ENCODE measurements at regions of chr17 and their contacts with region 1.

Region 1: DNA sequence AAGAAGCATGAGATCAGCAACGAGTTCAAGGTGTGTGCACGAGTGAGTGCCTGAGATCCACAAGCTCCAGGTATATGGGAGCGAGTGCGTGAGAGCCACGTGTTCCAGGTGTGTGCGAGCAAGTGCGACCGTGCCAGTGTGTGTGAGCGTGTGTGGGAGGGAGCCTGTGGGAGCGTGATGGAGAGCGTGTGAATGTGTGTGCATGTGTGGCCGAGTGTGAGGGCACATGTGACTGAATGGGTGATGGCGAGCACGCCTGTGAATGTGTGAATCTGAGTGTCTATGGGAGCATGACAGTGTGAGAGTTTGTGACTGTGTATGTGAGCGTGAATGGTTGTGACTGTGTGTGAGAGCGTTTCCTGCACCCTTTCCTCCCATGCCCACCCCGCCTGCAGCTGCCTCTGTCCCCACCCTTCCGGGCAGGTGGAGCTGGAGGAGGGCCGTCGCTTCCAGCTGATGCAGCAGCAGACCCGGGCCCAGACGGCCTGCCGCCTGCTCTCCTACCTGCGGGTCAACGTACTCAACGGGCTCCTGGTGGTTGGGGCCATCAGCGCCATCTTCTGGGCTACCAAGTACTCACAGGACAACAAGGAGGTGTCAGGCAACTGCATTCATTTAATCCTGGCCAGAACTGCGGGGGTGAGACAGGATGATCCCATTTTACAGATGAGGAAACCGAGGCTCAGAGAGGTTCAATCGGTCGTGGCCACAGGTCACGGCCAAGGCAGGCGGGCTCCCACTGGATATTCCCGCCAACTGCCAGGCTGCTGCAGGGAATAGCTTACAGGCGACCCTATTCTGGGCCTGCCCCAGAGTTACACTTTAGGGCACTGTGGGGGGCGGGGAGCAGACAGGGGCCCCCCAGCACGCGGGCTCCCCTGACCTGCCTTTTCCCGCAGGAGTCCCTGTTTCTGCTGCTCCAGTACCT is 3.7 kb downstream of the TMC8 start:
- DNase-seq: no peak
- ATAC-seq: peak; percentile 34
- H3K4me3 ChIP-seq: peak overlapping the region; percentile 94
- H3K27ac ChIP-seq: peak overlapping the region; percentile 93
- H3K4me1 ChIP-seq: peaks cover 64% of the 10 kb centered on the region
- H3K27me3 ChIP-seq: no peaks in the 10 kb centered on the region
- CTCF ChIP-seq: peak; percentile 76 to 78 (median 76)
- EP300 ChIP-seq: peak in 1 of 2 experiments; percentile 58; a peak in 1 of 4 replicates
- POLR2A ChIP-seq: peak; percentile 76
- RAD21 ChIP-seq: peak; percentile 75

Region 2: GRCh38 chr17:77935121-77935571 is 199.1 kb before region 1 on chr17:
- CTCF ChIA-PET with region 1: no interaction called
- POLR2A ChIA-PET with region 1: no interaction called
- RAD21 ChIA-PET with region 1: no interaction called
- SMC1A ChIA-PET with region 1: no interaction called
- in situ Hi-C with region 1: no loop called
- intact Hi-C with region 1: no loop called
- DNase-seq: no peak
- ATAC-seq: no peak
- H3K4me3 ChIP-seq: no peak overlapping the region
- H3K27ac ChIP-seq: no peak overlapping the region
- H3K4me1 ChIP-seq: no peaks in the 10 kb centered on the region
- H3K27me3 ChIP-seq: peaks cover 1 to 2% of the 10 kb centered on the region in 2 experiments; a peak in 2 of 4 replicates
- CTCF ChIP-seq: no peak
- EP300 ChIP-seq: no peak
- POLR2A ChIP-seq: no peak
- RAD21 ChIP-seq: no peak

Region 3: GRCh38 chr17:78112518-78113226 is 21.6 kb before region 1 on chr17:
- CTCF ChIA-PET with region 1: interaction called, 24 read pairs
- POLR2A ChIA-PET with region 1: interaction called, 3 read pairs
- RAD21 ChIA-PET with region 1: interaction called, 6 read pairs
- SMC1A ChIA-PET with region 1: interaction called, 3 read pairs
- in situ Hi-C with region 1: no loop called
- intact Hi-C with region 1: loop called (anchors 2 kb)
- DNase-seq: no peak
- ATAC-seq: peak; percentile 84
- H3K4me3 ChIP-seq: no peak overlapping the region
- H3K27ac ChIP-seq: no peak overlapping the region; the same call in 1 of the 2 replicates
- H3K4me1 ChIP-seq: peaks cover 27% of the 10 kb centered on the region
- H3K27me3 ChIP-seq: no peaks in the 10 kb centered on the region
- CTCF ChIP-seq: peak; percentile 93 to 99 (median 96); a peak in 5 of 6 replicates
- EP300 ChIP-seq: no peak
- POLR2A ChIP-seq: peak; percentile 77
- RAD21 ChIP-seq: peak; percentile 96

Region 4: GRCh38 chr17:78120971-78121800 is 13.0 kb before region 1 on chr17:
- CTCF ChIA-PET with region 1: interaction called, 66 read pairs
- POLR2A ChIA-PET with region 1: interaction called, 11 read pairs
- RAD21 ChIA-PET with region 1: interaction called, 26 read pairs
- SMC1A ChIA-PET with region 1: interaction called, 14 read pairs
- in situ Hi-C with region 1: no loop called
- intact Hi-C with region 1: no loop called
- DNase-seq: no peak
- ATAC-seq: peak; percentile 14
- H3K4me3 ChIP-seq: peak overlapping the region; percentile 70
- H3K27ac ChIP-seq: peak overlapping the region; percentile 85
- H3K4me1 ChIP-seq: peaks cover 53% of the 10 kb centered on the region
- H3K27me3 ChIP-seq: no peaks in the 10 kb centered on the region
- CTCF ChIP-seq: peak in 1 of 3 experiments; percentile 39; a peak in 1 of 6 replicates
- EP300 ChIP-seq: no peak
- POLR2A ChIP-seq: peak; percentile 71
- RAD21 ChIP-seq: no peak

Region 5: GRCh38 chr17:78147315-78147998 is 13.2 kb after region 1 on chr17:
- CTCF ChIA-PET with region 1: interaction called, 11 read pairs
- POLR2A ChIA-PET with region 1: interaction called, 14 read pairs
- RAD21 ChIA-PET with region 1: interaction called, 10 read pairs
- SMC1A ChIA-PET with region 1: interaction called, 9 read pairs
- in situ Hi-C with region 1: no loop called
- intact Hi-C with region 1: no loop called
- DNase-seq: peak; percentile 85
- ATAC-seq: peak; percentile 82
- H3K4me3 ChIP-seq: peak overlapping the region; percentile 10; the same call in 1 of the 2 replicates
- H3K27ac ChIP-seq: peak overlapping the region; percentile 96
- H3K4me1 ChIP-seq: peaks cover 70% of the 10 kb centered on the region
- H3K27me3 ChIP-seq: no peaks in the 10 kb centered on the region
- CTCF ChIP-seq: no peak
- EP300 ChIP-seq: peak; percentile 88 to 93; a peak in 3 of 4 replicates
- POLR2A ChIP-seq: peak; percentile 49; the same call in 1 of the 2 replicates
- RAD21 ChIP-seq: 0 out of 2 replicates have a peak, but pooled peaks have one; percentile 4

Measured in GM12878 (cell line).